ENCODE measurements at regions of chr3 and their contacts with region 1.

Region 1: GRCh38 chr3:157136647-157137387 is 23.1 kb downstream of the CCNL1 start:
- DNase-seq: peak; percentile 50
- H3K4me3 ChIP-seq: no peak overlapping the region
- H3K27ac ChIP-seq: peak overlapping the region; percentile 45
- H3K4me1 ChIP-seq: peaks cover 50% of the 10 kb centered on the region
- H3K27me3 ChIP-seq: no peaks in the 10 kb centered on the region

Region 2: GRCh38 chr3:157088601-157089454 is 48.0 kb before region 1 on chr3:
- in situ Hi-C with region 1: loop called (anchors 5 kb)
- DNase-seq: peak; percentile 95
- H3K4me3 ChIP-seq: peak overlapping the region; percentile 71
- H3K27ac ChIP-seq: peak overlapping the region; percentile 89
- H3K4me1 ChIP-seq: peaks cover 22% of the 10 kb centered on the region
- H3K27me3 ChIP-seq: no peaks in the 10 kb centered on the region